Activated CD8-positive, alpha-beta T cell treated with anti-CD3 and anti-CD28 coated beads for 36 hours (primary cell): ENCODE measurements at regions of chr19 and their contacts with region 1.

Region 1: DNA sequence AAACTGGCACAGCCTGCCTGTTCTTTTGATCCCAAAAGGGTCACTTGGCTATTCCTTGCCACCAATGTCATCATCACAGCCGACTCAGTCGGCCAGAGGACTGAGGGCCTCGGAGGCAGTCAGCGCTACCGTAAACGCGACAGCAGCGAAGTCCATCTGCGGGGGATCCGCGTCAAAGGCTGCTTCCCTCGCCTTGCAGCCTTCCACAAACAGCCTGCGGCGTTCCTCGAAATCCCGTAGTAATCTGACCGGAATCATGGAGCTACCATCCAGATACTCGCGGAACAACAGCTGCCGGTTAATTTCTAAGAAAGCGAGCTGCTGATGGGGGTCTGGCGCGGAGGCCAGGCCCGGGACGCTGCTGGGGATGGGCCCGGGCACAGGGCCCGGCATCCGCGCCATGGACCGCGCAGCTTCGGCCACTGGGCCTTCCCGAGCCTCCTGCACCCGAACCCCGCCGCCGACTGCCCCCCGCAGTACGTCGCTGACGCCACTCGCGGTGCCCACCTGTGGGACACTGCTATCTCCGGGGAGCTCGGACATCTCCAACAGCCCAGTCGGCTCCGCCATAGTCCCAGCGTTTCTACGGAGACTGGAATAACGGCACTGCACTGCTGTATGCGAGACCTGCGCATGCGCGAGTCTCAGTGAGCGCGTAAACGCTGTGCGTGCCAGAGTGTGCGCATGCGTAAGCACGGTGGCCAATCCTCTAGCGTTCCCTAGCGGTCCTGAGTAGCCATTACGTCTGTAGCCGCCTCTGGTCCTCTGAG is at the start of gene EID2B:
- DNase-seq: peak; percentile 95
- ATAC-seq: peak; percentile 99
- H3K4me3 Mint-ChIP-seq: peak within 1 kb of the TSS; percentile 92
- H3K27ac Mint-ChIP-seq: peak within 1 kb of the TSS; percentile 85
- H3K4me1 Mint-ChIP-seq: peaks cover 22% of the 10 kb centered on the region
- H3K27me3 Mint-ChIP-seq: no peaks in the 10 kb centered on the region
- CTCF ChIP-seq: peak; percentile 98
- total RNA-seq, gene EID2B: 3.0 TPM

Region 2: DNA sequence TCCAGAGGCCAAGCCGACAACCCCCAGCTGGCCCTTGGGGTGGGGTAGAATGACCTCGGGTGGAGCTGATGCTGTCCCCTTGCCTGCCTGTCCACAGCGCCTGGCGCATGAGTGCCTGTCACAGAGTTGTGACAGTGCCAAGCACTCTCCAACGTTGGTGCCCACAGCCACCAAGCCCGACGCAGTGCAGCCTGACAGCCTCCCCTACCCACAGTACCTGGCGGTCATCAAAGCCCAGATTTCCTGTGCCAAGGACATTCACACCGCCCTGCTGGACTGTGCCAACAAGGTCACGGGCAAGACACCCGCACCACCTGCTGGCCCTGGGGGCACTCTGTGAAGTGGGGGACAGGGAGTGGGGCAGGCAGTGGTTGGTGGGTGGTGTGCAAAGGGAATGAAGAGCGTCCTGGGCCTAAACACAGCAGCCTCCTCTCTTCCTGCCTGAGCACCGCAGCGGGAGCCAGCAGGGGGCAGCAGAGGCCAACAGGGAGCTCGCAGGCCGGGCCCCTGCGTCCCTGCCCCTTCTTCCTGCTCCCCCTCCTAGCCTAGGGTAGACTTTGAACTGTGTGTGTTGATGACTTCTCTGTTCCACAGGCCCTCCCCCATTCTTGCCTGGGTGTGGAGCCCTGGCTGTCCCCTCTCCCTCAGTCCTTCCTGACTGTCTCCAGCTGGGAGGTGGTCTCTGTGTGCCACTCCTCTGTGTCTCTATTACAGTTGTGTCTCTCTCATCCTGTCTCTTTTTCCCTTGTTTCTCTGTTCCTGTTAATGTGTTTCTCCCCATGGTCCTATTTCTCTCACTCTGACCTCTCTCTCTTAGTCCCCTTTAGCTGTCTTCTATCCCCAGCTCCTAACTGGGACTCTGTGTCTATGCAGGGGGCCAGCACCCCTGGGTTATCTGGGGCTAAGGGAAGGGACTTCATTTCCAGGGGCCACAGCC is 134.8 kb before region 1 on chr19:
- CTCF ChIA-PET with region 1: interaction called, 11 read pairs
- POLR2A ChIA-PET with region 1: interaction called, 4 read pairs
- intact Hi-C with region 1: no loop called
- DNase-seq: peak; percentile 97
- ATAC-seq: peak; percentile 64
- H3K4me3 Mint-ChIP-seq: peak overlapping the region; percentile 44
- H3K27ac Mint-ChIP-seq: peak overlapping the region; percentile 90
- H3K4me1 Mint-ChIP-seq: peaks cover 65% of the 10 kb centered on the region
- H3K27me3 Mint-ChIP-seq: no peaks in the 10 kb centered on the region
- CTCF ChIP-seq: peak; percentile 92

Region 3: GRCh38 chr19:39445265-39446111 is 86.9 kb before region 1 on chr19 and contains the start of gene SUPT5H:
- CTCF ChIA-PET with region 1: interaction called, 16 read pairs
- POLR2A ChIA-PET with region 1: interaction called, 6 read pairs
- intact Hi-C with region 1: loop called (anchors 5 kb)
- DNase-seq: peak; percentile 99
- ATAC-seq: peak; percentile 93
- H3K4me3 Mint-ChIP-seq: peak within 1 kb of the TSS; percentile 100
- H3K27ac Mint-ChIP-seq: peak within 1 kb of the TSS; percentile 99
- H3K4me1 Mint-ChIP-seq: peaks cover 40% of the 10 kb centered on the region
- H3K27me3 Mint-ChIP-seq: no peaks in the 10 kb centered on the region
- CTCF ChIP-seq: no peak
- total RNA-seq, gene SUPT5H: 127 to 141 TPM

Region 4: DNA sequence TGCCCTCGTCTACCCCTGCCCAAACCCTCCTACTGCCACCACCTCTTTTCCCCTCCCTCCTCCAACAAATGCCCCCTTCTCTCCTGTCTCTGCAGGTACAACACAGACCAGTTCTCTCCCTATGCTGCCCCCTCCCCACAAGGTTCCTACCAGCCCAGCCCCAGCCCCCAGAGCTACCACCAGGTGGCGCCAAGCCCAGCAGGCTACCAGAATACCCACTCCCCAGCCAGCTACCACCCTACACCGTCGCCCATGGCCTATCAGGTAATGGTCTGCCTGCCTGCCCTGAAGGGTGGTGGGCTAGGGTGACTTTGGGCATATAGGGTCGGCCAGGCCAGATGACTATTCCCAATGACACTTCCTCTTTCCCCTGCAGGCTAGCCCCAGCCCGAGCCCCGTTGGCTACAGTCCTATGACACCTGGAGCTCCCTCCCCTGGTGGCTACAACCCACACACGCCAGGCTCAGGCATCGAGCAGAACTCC is 58.2 kb before region 1 on chr19:
- CTCF ChIA-PET with region 1: interaction called, 52 read pairs
- POLR2A ChIA-PET with region 1: no interaction called
- intact Hi-C with region 1: loop called (anchors 10 kb)
- DNase-seq: peak; percentile 80
- ATAC-seq: peak; percentile 70
- H3K4me3 Mint-ChIP-seq: no peak overlapping the region
- H3K27ac Mint-ChIP-seq: no peak overlapping the region
- H3K4me1 Mint-ChIP-seq: peaks cover 32% of the 10 kb centered on the region
- H3K27me3 Mint-ChIP-seq: no peaks in the 10 kb centered on the region
- CTCF ChIP-seq: peak; percentile 76

Region 5: GRCh38 chr19:39502640-39503417 is 29.6 kb before region 1 on chr19:
- CTCF ChIA-PET with region 1: interaction called, 29 read pairs
- POLR2A ChIA-PET with region 1: interaction called, 4 read pairs
- intact Hi-C with region 1: no loop called
- DNase-seq: peak; percentile 76
- ATAC-seq: peak; percentile 67
- H3K4me3 Mint-ChIP-seq: no peak overlapping the region
- H3K27ac Mint-ChIP-seq: no peak overlapping the region
- H3K4me1 Mint-ChIP-seq: peaks cover 33% of the 10 kb centered on the region
- H3K27me3 Mint-ChIP-seq: peaks cover 64% of the 10 kb centered on the region
- CTCF ChIP-seq: peak; percentile 98

Region 6: GRCh38 chr19:39824143-39825092 is 292.0 kb after region 1 on chr19:
- CTCF ChIA-PET with region 1: no interaction called
- POLR2A ChIA-PET with region 1: no interaction called
- intact Hi-C with region 1: no loop called
- DNase-seq: peak; percentile 94
- ATAC-seq: peak; percentile 99
- H3K4me3 Mint-ChIP-seq: no peak overlapping the region
- H3K27ac Mint-ChIP-seq: no peak overlapping the region
- H3K4me1 Mint-ChIP-seq: peaks cover 9% of the 10 kb centered on the region
- H3K27me3 Mint-ChIP-seq: no peaks in the 10 kb centered on the region
- CTCF ChIP-seq: no peak